Activated T-helper 1 cell treated with anti-CD3 and anti-CD28 coated beads, Interleukin-12 subunit alpha, Interleukin-12 subunit beta, Interleukin-2, Interleukin-4 antibody, amounts not matched to agents 30 ng/mL and 10 ng/mL and 1 ng/mL, durations not matched to agents 14 hours and 24 hours and 36 hours (primary cell): ENCODE measurements at regions of chr4 and their contacts with region 1.

Region 1: DNA sequence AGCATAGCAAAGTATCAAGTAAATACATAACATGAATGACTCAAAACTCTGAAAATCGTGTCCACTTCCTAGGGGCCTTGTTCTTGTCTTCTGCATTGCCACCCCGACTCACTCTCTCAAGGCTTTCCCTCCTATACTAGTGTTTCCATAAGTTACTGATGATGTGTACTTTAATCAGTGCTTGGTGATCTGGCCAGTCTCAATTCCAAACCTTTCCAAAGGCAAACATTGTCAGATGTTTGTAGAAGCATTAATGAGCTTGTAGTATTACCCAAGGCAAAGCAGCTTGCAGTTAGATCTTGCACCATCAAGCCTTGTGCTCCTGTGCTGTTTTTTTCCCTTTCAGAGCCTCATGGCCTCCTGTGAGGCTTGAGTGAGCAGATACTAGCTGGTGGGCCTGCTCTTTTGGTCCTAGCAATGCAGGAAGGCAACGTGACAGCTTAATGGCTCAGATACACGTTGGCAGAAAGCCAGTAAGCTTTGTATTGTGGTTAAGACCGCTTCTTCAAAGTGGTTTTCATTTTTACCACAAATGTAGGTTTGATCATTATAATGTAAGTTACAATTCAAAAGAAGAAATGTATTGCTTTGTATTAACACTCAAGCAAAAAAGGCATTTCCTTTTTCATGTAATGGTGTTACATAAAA is 51.8 kb downstream of the RBPJ start:
- DNase-seq: peak; percentile 39
- H3K4me3 Mint-ChIP-seq: peak overlapping the region; percentile 3
- H3K27ac Mint-ChIP-seq: peak overlapping the region; percentile 41
- H3K4me1 Mint-ChIP-seq: peaks cover 66% of the 10 kb centered on the region
- H3K27me3 Mint-ChIP-seq: no peaks in the 10 kb centered on the region

Region 2: DNA sequence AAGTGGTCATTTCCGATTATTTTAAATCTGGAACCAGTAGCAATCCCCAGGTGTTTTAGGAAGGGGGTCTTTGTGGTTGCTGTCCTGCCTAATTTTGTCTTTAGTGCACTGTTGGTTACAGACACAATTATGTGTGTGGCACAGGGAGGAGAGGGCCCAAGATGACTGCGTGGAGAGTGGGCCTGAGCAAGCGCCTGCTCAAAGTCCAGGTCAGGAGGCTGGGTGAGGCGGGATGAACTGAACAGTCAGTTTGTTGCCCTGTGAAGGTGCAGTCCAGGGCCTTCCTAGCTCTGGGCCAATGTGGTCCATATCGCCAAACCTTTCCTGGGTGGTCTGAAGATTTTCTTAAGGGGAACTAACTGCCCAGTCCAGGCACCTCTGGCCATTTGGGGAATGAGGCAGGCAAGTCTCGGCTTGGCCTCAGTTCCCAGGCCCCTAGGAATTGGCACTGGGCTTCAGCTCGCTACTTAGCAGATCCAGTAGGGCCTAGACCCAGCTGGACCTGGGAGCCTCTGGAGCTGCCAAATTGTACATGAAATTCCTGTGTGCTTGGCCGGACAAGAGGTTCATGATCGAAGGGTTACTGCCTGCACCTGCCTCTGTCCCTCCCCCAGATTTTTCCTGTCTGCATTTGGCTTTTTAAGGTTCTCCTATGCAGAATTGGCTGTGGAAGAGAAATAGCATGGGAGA is 948.0 kb before region 1 on chr4:
- intact Hi-C with region 1: no loop called
- DNase-seq: no peak
- H3K4me3 Mint-ChIP-seq: no peak overlapping the region
- H3K27ac Mint-ChIP-seq: no peak overlapping the region
- H3K4me1 Mint-ChIP-seq: peaks cover 7% of the 10 kb centered on the region
- H3K27me3 Mint-ChIP-seq: no peaks in the 10 kb centered on the region

Region 3: GRCh38 chr4:26325191-26325590 is 47.5 kb before region 1 on chr4:
- intact Hi-C with region 1: loop called (anchors 2 kb)
- DNase-seq: peak; percentile 24
- H3K4me3 Mint-ChIP-seq: peak overlapping the region; percentile 85
- H3K27ac Mint-ChIP-seq: peak overlapping the region; percentile 80
- H3K4me1 Mint-ChIP-seq: peaks cover 47% of the 10 kb centered on the region
- H3K27me3 Mint-ChIP-seq: no peaks in the 10 kb centered on the region

Region 4: GRCh38 chr4:26356081-26356501 is 16.6 kb before region 1 on chr4:
- intact Hi-C with region 1: loop called (anchors 2 kb)
- DNase-seq: no peak
- H3K4me3 Mint-ChIP-seq: no peak overlapping the region
- H3K27ac Mint-ChIP-seq: no peak overlapping the region
- H3K4me1 Mint-ChIP-seq: peaks cover 30% of the 10 kb centered on the region
- H3K27me3 Mint-ChIP-seq: no peaks in the 10 kb centered on the region

Region 5: GRCh38 chr4:26388671-26389070 is 16.0 kb after region 1 on chr4:
- intact Hi-C with region 1: loop called (anchors 2 kb)
- DNase-seq: no peak
- H3K4me3 Mint-ChIP-seq: no peak overlapping the region
- H3K27ac Mint-ChIP-seq: peak overlapping the region; percentile 42
- H3K4me1 Mint-ChIP-seq: peaks cover 34% of the 10 kb centered on the region
- H3K27me3 Mint-ChIP-seq: no peaks in the 10 kb centered on the region

Region 6: GRCh38 chr4:26410385-26411293 is 38.0 kb after region 1 on chr4:
- intact Hi-C with region 1: loop called (anchors 5 kb)
- DNase-seq: peak; percentile 19
- H3K4me3 Mint-ChIP-seq: no peak overlapping the region
- H3K27ac Mint-ChIP-seq: no peak overlapping the region
- H3K4me1 Mint-ChIP-seq: peaks cover 25% of the 10 kb centered on the region
- H3K27me3 Mint-ChIP-seq: no peaks in the 10 kb centered on the region